Activated CD4-positive, alpha-beta T cell treated with anti-CD3 and anti-CD28 coated beads, Interleukin-2, amount 10 ng/mL, durations not matched to agents 24 days and 14 days (primary cell): ENCODE measurements at regions of chr5 and their contacts with region 1.

Region 1: DNA sequence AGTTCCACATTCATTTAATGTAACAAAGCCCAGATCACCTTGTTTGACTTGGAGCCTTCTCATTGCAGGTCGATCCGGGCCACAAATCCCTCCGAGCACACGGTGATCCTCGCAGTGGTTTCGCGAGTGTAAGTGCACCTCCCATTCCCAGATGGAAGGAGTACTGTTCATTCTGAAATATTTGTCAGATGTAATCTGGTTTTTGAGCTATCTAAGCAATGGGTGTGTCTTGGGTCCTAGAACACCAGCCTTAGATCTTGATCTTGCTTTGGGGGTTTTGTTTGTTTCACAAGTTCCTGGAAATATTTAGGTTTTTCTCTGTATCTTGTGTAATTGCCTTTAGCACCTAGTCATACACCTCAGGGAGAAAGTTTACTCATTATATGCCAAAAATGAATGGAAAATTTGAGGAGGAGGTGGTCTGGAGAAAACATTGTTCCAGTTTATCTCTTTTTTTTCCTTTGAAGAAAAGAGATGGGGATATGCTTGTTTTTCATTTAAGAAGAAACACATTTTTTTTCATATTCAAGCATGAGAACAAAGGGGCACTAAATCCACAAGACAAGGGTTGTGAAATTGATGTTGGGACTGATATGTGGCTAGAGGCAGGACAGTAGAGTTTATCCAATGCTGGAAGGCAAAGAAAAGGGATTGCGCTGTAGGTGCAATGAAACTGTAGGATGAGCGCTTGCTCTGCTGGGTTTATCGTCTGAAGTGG is 118.6 kb downstream of the PDE8B start:
- DNase-seq: peak; percentile 58
- H3K4me3 Mint-ChIP-seq: peak overlapping the region; percentile 39
- H3K27ac Mint-ChIP-seq: peak overlapping the region; percentile 78
- H3K4me1 Mint-ChIP-seq: peaks cover 29% of the 10 kb centered on the region
- H3K27me3 Mint-ChIP-seq: peaks cover 4% of the 10 kb centered on the region

Region 2: GRCh38 chr5:77168161-77168875 is 160.8 kb before region 1 on chr5:
- intact Hi-C with region 1: no loop called
- DNase-seq: no peak
- H3K4me3 Mint-ChIP-seq: no peak overlapping the region
- H3K27ac Mint-ChIP-seq: no peak overlapping the region
- H3K4me1 Mint-ChIP-seq: no peaks in the 10 kb centered on the region
- H3K27me3 Mint-ChIP-seq: peaks cover 17% of the 10 kb centered on the region

Region 3: GRCh38 chr5:77259476-77259875 is 69.6 kb before region 1 on chr5:
- intact Hi-C with region 1: loop called (anchors 2 kb)
- DNase-seq: no peak
- H3K4me3 Mint-ChIP-seq: no peak overlapping the region
- H3K27ac Mint-ChIP-seq: peak overlapping the region; percentile 64
- H3K4me1 Mint-ChIP-seq: peaks cover 8% of the 10 kb centered on the region
- H3K27me3 Mint-ChIP-seq: peaks cover 13% of the 10 kb centered on the region

Region 4: GRCh38 chr5:77356740-77357139 is 27.7 kb after region 1 on chr5:
- intact Hi-C with region 1: loop called (anchors 1 kb)
- DNase-seq: peak; percentile 77
- H3K4me3 Mint-ChIP-seq: no peak overlapping the region
- H3K27ac Mint-ChIP-seq: peak overlapping the region; percentile 13
- H3K4me1 Mint-ChIP-seq: peaks cover 17% of the 10 kb centered on the region
- H3K27me3 Mint-ChIP-seq: peaks cover 14% of the 10 kb centered on the region